Activated B cell treated with CpG ODN at 0.5 μM for 24 hours (primary cell): ENCODE measurements at regions of chr19 and their contacts with region 1.

Region 1: GRCh38 chr19:2950286-2951124 is 5.7 kb upstream of the ZNF77 start:
- DNase-seq: peak; percentile 99
- ATAC-seq: peak; percentile 93
- H3K4me3 Mint-ChIP-seq: peak overlapping the region; percentile 98
- H3K27ac Mint-ChIP-seq: peak overlapping the region; percentile 98
- H3K4me1 Mint-ChIP-seq: peaks cover 20% of the 10 kb centered on the region
- H3K27me3 Mint-ChIP-seq: no peaks in the 10 kb centered on the region
- CTCF ChIP-seq: no peak

Region 2: GRCh38 chr19:2726904-2727639 is 223.4 kb before region 1 on chr19:
- CTCF ChIA-PET with region 1: no interaction called
- POLR2A ChIA-PET with region 1: interaction called, 13 read pairs
- intact Hi-C with region 1: no loop called
- DNase-seq: no peak
- ATAC-seq: peak; percentile 43
- H3K4me3 Mint-ChIP-seq: no peak overlapping the region
- H3K27ac Mint-ChIP-seq: no peak overlapping the region
- H3K4me1 Mint-ChIP-seq: peaks cover 27% of the 10 kb centered on the region
- H3K27me3 Mint-ChIP-seq: peaks cover 2% of the 10 kb centered on the region
- CTCF ChIP-seq: no peak

Region 3: DNA sequence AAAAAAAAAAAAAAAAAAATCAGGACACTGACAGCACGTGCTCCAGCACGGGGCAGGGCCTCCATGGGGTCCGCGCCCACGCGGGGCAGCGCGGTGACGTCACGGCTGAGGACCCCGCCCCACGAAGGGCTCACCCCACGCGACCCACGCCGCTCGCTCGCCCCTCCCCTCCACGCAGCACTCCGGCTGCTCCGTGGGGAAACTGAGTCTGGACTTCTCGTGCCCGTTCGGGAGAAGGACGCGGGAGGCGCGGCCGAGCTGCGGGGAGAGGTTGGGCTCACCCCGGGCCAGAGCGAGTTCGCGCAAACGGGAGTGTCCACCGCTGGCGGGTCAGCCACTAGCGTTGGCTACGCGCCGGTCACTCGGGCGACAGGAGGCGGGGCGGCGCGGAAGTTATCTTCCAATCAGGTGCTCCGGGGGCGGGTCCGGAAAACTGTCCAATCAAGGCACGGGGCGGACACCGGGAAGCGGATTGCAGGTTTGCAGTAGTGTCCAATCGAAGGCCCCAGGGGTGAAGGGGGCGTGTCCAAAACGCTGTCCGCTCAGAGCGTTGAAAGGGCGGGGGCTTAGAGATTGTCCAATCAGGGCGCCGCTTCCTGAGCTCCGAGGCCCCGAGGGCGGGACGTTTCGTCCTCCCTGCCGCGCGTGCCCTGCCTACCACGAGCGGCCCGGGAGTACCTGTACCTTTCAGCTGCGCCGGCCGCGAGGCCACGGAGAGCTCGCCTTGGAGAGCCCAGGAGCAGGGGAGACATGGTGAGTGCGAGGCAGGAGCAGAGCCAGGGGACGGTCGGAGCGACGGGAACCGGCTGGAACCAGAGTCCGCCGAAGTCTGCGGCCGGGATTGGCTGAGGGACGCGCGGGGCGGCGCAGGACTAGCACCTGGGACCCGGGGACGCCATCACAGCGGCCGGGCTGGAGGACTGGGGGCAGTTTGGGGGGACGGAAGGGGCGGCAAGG is 49.9 kb before region 1 on chr19 and contains the start of gene ZNF57:
- CTCF ChIA-PET with region 1: no interaction called
- POLR2A ChIA-PET with region 1: interaction called, 13 read pairs
- intact Hi-C with region 1: loop called (anchors 1 kb)
- DNase-seq: peak; percentile 89
- ATAC-seq: peak; percentile 99
- H3K4me3 Mint-ChIP-seq: peak within 1 kb of the TSS; percentile 99
- H3K27ac Mint-ChIP-seq: peak within 1 kb of the TSS; percentile 87
- H3K4me1 Mint-ChIP-seq: peaks cover 10% of the 10 kb centered on the region
- H3K27me3 Mint-ChIP-seq: no peaks in the 10 kb centered on the region
- CTCF ChIP-seq: no peak
- total RNA-seq, gene ZNF57: 4.6 and 5.3 TPM in 2 replicates

Region 4: GRCh38 chr19:3035542-3036118 is 85.1 kb after region 1 on chr19:
- CTCF ChIA-PET with region 1: interaction called, 3 read pairs
- POLR2A ChIA-PET with region 1: interaction called, 14 read pairs
- intact Hi-C with region 1: loop called (anchors 1 kb)
- DNase-seq: peak; percentile 82
- ATAC-seq: peak; percentile 93
- H3K4me3 Mint-ChIP-seq: peak overlapping the region; percentile 90
- H3K27ac Mint-ChIP-seq: peak overlapping the region; percentile 88
- H3K4me1 Mint-ChIP-seq: peaks cover 17% of the 10 kb centered on the region
- H3K27me3 Mint-ChIP-seq: peaks cover 11% of the 10 kb centered on the region
- CTCF ChIP-seq: no peak

Region 5: GRCh38 chr19:3108775-3109174 is 158.3 kb after region 1 on chr19:
- CTCF ChIA-PET with region 1: interaction called, 41 read pairs
- POLR2A ChIA-PET with region 1: interaction called, 3 read pairs
- intact Hi-C with region 1: loop called (anchors 1 kb)
- DNase-seq: peak; percentile 61
- ATAC-seq: peak; percentile 76
- H3K4me3 Mint-ChIP-seq: no peak overlapping the region
- H3K27ac Mint-ChIP-seq: no peak overlapping the region
- H3K4me1 Mint-ChIP-seq: peaks cover 11% of the 10 kb centered on the region
- H3K27me3 Mint-ChIP-seq: no peaks in the 10 kb centered on the region
- CTCF ChIP-seq: no peak

Region 6: GRCh38 chr19:3434712-3435553 is 484.4 kb after region 1 on chr19:
- CTCF ChIA-PET with region 1: no interaction called
- POLR2A ChIA-PET with region 1: no interaction called
- intact Hi-C with region 1: loop called (anchors 1 kb)
- DNase-seq: peak; percentile 98
- ATAC-seq: peak; percentile 92
- H3K4me3 Mint-ChIP-seq: peak overlapping the region; percentile 99
- H3K27ac Mint-ChIP-seq: peak overlapping the region; percentile 99
- H3K4me1 Mint-ChIP-seq: peaks cover 17% of the 10 kb centered on the region
- H3K27me3 Mint-ChIP-seq: no peaks in the 10 kb centered on the region
- CTCF ChIP-seq: no peak